ENCODE measurements at regions of chr14 and their contacts with region 1.

Region 1: DNA sequence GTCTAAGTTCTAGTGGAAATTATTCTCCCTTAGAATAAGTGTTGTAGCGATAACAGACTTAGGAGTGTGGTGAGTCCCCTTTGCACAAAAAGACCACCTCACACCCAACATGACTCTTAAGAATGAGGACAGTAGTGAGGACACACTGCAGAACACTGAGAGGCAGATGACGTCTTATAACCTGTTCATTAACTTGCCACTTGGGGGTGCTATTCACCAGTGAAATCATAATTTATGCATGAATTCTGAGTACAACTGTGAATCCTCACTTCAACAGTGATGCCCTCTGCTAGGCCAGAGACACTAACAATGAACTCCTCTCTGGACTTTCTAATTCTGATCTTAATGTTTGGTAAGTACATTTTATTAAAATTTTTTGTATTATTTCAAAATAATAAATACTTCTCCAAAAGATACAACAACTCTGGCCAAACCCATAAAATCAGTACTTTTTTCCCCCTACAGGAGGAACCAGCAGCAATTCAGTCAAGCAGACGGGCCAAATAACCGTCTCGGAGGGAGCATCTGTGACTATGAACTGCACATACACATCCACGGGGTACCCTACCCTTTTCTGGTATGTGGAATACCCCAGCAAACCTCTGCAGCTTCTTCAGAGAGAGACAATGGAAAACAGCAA is 274.7 kb downstream of the DAD1 start:
- DNase-seq: peak in 1 of 5 donors; percentile 7
- H3K4me3 ChIP-seq: no peak overlapping the region
- H3K4me3 Mint-ChIP-seq: peak overlapping the region in 5 of 8 donors; percentile 49 to 60 (median 59)
- H3K27ac ChIP-seq: no peak overlapping the region
- H3K27ac Mint-ChIP-seq: peak overlapping the region in 5 of 7 donors; percentile 35 to 87 (median 51)
- H3K4me1 ChIP-seq: no peaks in the 10 kb centered on the region
- H3K4me1 Mint-ChIP-seq: no peaks in the 10 kb centered on the region
- H3K27me3 ChIP-seq: no peaks in the 10 kb centered on the region
- H3K27me3 Mint-ChIP-seq: no peaks in the 10 kb centered on the region

Region 2: DNA sequence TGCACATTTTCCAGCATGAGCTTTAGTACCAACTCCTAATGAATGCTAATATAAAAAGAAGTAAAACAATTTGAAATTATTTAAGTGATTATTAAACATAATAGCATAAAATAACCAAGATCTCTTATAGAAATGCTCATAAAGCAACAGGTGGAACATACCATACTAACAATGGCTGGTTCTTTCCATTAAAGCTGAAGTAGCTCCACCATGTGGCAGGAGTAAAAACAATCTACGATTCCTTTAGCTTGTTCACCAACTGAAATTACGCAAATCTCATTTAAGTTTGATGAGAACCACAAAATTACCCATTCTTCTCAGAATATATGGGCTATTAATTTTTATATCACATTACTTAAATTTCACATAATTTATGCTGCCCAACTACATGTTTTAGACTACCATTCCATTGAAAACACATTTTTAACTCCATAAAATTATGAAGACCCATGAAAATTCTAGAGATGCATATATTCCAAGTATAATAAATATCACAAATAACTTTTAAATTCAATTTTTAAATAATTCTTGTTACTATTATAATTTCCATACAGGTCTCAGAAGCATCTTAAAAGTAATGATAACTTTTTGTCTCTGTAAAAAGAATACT is 61.1 kb after region 1 on chr14:
- CTCF ChIA-PET with region 1: no interaction called
- POLR2A ChIA-PET with region 1: no interaction called
- intact Hi-C with region 1: loop called (anchors 10 kb)
- DNase-seq: no peak
- H3K4me3 ChIP-seq: no peak overlapping the region
- H3K4me3 Mint-ChIP-seq: no peak overlapping the region
- H3K27ac ChIP-seq: no peak overlapping the region
- H3K27ac Mint-ChIP-seq: no peak overlapping the region
- H3K4me1 ChIP-seq: no peaks in the 10 kb centered on the region
- H3K4me1 Mint-ChIP-seq: no peaks in the 10 kb centered on the region
- H3K27me3 ChIP-seq: no peaks in the 10 kb centered on the region
- H3K27me3 Mint-ChIP-seq: no peaks in the 10 kb centered on the region

Region 3: GRCh38 chr14:22491683-22492621 is 177.7 kb after region 1 on chr14:
- CTCF ChIA-PET with region 1: no interaction called
- POLR2A ChIA-PET with region 1: interaction called, 5 read pairs
- intact Hi-C with region 1: loop called (anchors 10 kb)
- DNase-seq: peak in 2 of 5 donors; percentile 36 to 80
- H3K4me3 ChIP-seq: peak overlapping the region in 1 of 2 donors; percentile 55
- H3K4me3 Mint-ChIP-seq: peak overlapping the region; percentile 86 to 96 (median 90)
- H3K27ac ChIP-seq: peak overlapping the region; percentile 67
- H3K27ac Mint-ChIP-seq: peak overlapping the region; percentile 91 to 100 (median 94)
- H3K4me1 ChIP-seq: peaks cover 6% of the 10 kb centered on the region
- H3K4me1 Mint-ChIP-seq: peaks cover 1 to 76% (median 9%) of the 10 kb centered on the region in 4 donors
- H3K27me3 ChIP-seq: no peaks in the 10 kb centered on the region
- H3K27me3 Mint-ChIP-seq: no peaks in the 10 kb centered on the region